WTC11 (cell line): ENCODE measurements at regions of chr4 and their contacts with region 1.

Region 1: GRCh38 chr4:674172-675035 is at the starts of genes ATP5ME and MYL5:
- DNase-seq: peak; percentile 93
- ATAC-seq: peak; percentile 83
- H3K4me3 Mint-ChIP-seq: peak within 1 kb of the TSS; percentile 86
- H3K27ac Mint-ChIP-seq: peak within 1 kb of the TSS; percentile 94
- H3K4me1 Mint-ChIP-seq: peaks cover 7% of the 10 kb centered on the region
- H3K27me3 Mint-ChIP-seq: peaks cover 3% of the 10 kb centered on the region
- CTCF ChIP-seq: peak; percentile 94
- total RNA-seq, gene ATP5ME: 458 to 478 TPM (median 468 TPM) in 3 replicates
- total RNA-seq, gene MYL5: 12.1 to 22.2 TPM (median 14.8 TPM) in 3 replicates

Region 2: DNA sequence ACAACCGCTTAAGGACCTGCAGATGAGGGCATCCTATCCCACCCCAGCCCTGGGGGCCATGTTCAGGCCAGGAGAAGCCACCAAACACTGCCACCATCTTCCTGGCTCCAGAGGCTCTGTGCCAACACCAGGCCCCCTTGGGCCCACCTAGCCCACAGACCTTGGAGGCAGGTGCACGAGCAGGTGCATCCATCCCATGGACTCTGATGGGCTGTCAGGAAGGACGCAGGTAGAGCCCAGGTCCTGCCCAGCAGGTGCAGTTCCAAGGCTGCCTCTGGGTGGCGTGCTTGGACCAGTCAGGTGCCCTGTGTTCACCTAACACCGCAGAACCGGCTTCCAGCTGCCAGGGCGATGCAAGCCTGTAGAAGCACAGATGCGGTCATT is 71.9 kb before region 1 on chr4:
- CTCF ChIA-PET with region 1: interaction called, 22 read pairs
- POLR2A ChIA-PET with region 1: interaction called, 3 read pairs
- DNase-seq: peak; percentile 99
- ATAC-seq: peak; percentile 99
- H3K4me3 Mint-ChIP-seq: no peak overlapping the region
- H3K27ac Mint-ChIP-seq: no peak overlapping the region
- H3K4me1 Mint-ChIP-seq: peaks cover 6% of the 10 kb centered on the region
- H3K27me3 Mint-ChIP-seq: peaks cover 4% of the 10 kb centered on the region
- CTCF ChIP-seq: peak; percentile 92

Region 3: DNA sequence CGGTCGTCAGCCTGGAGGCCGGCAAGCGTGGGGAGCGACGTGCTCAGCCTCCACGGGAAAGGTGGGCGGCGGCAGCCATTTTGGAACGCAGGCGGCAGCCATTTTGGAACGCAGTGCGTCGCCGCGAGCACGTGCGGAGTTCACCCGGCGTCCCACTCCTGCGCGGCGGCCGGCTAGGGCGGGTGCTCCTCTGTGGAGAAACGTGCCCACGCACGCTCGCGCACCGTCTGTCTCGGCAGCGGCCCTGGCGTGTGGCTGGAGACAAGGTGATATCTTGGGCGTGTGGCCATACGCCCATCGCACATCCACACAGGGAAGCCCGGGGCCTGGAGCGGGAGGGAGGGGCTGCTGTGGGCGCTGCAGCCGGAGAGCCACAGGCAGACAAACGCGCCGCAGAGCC is 130.4 kb after region 1 on chr4:
- CTCF ChIA-PET with region 1: no interaction called
- POLR2A ChIA-PET with region 1: no interaction called
- DNase-seq: no peak
- ATAC-seq: no peak
- H3K4me3 Mint-ChIP-seq: no peak overlapping the region
- H3K27ac Mint-ChIP-seq: no peak overlapping the region
- H3K4me1 Mint-ChIP-seq: no peaks in the 10 kb centered on the region
- H3K27me3 Mint-ChIP-seq: peaks cover 87% of the 10 kb centered on the region
- CTCF ChIP-seq: no peak

Region 4: DNA sequence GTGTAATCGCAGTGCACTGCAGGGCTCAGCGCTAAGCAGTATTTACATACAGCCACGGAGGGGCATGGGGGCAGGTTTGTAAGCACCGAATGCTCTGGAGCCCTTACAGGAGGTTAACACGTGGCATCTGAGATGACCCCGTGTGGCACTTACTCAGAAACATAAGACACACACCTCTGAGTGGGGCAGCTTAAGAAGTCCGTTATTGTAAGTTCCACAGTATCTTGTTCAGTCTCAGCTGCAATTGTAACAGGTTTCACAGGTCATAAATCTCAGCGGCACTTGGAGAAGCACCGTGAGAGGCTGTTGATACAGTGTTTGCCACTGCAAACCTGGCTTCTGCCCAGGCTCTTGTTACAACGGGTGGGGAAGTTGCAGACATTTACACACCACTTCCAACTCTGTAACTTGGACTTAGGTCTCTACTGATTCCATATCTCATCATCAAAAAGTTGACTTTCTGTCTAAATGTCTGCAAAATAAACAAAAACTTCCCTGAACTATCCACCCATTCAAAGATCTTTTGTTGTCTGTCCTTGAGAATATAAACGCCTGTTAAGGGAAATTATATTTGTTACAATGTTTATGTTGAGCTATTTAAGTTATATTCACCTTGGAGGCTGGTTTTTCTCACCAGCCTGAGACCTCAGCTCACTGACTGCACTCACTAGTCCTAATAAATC is 141.2 kb after region 1 on chr4:
- CTCF ChIA-PET with region 1: no interaction called
- POLR2A ChIA-PET with region 1: no interaction called
- DNase-seq: no peak
- ATAC-seq: no peak
- H3K4me3 Mint-ChIP-seq: no peak overlapping the region
- H3K27ac Mint-ChIP-seq: no peak overlapping the region
- H3K4me1 Mint-ChIP-seq: no peaks in the 10 kb centered on the region
- H3K27me3 Mint-ChIP-seq: peaks cover 97% of the 10 kb centered on the region
- CTCF ChIP-seq: no peak